A673 (cell line): ENCODE measurements at regions of chr22 and their contacts with region 1.

Region 1: GRCh38 chr22:28829358-28830181 is 29.2 kb upstream of the XBP1 start:
- DNase-seq: peak; percentile 80
- H3K4me3 ChIP-seq: no peak overlapping the region
- H3K27ac ChIP-seq: no peak overlapping the region
- H3K4me1 ChIP-seq: no peaks in the 10 kb centered on the region
- H3K27me3 ChIP-seq: no peaks in the 10 kb centered on the region
- CTCF ChIP-seq: peak; percentile 98

Region 2: GRCh38 chr22:28019881-28020871 is 809.4 kb before region 1 on chr22:
- CTCF ChIA-PET with region 1: interaction called, 3 read pairs
- POLR2A ChIA-PET with region 1: no interaction called
- intact Hi-C with region 1: loop called (anchors 10 kb)
- DNase-seq: peak; percentile 77
- H3K4me3 ChIP-seq: no peak overlapping the region
- H3K27ac ChIP-seq: no peak overlapping the region
- H3K4me1 ChIP-seq: no peaks in the 10 kb centered on the region
- H3K27me3 ChIP-seq: no peaks in the 10 kb centered on the region
- CTCF ChIP-seq: peak; percentile 97

Region 3: GRCh38 chr22:28373831-28374230 is 455.7 kb before region 1 on chr22:
- CTCF ChIA-PET with region 1: no interaction called
- POLR2A ChIA-PET with region 1: interaction called, 13 read pairs
- intact Hi-C with region 1: no loop called
- DNase-seq: no peak
- H3K4me3 ChIP-seq: no peak overlapping the region
- H3K27ac ChIP-seq: no peak overlapping the region
- H3K4me1 ChIP-seq: peaks cover 22% of the 10 kb centered on the region
- H3K27me3 ChIP-seq: no peaks in the 10 kb centered on the region
- CTCF ChIP-seq: no peak

Region 4: GRCh38 chr22:28600546-28601143 is 228.9 kb before region 1 on chr22:
- CTCF ChIA-PET with region 1: interaction called, 16 read pairs
- POLR2A ChIA-PET with region 1: interaction called, 4 read pairs
- intact Hi-C with region 1: loop called (anchors 1 kb)
- DNase-seq: peak; percentile 81
- H3K4me3 ChIP-seq: no peak overlapping the region
- H3K27ac ChIP-seq: no peak overlapping the region
- H3K4me1 ChIP-seq: peaks cover 20% of the 10 kb centered on the region
- H3K27me3 ChIP-seq: no peaks in the 10 kb centered on the region
- CTCF ChIP-seq: peak; percentile 68

Region 5: GRCh38 chr22:28791841-28792490 is 37.6 kb before region 1 on chr22:
- CTCF ChIA-PET with region 1: no interaction called
- POLR2A ChIA-PET with region 1: no interaction called
- intact Hi-C with region 1: no loop called
- DNase-seq: no peak
- H3K4me3 ChIP-seq: no peak overlapping the region
- H3K27ac ChIP-seq: no peak overlapping the region
- H3K4me1 ChIP-seq: peaks cover 5% of the 10 kb centered on the region
- H3K27me3 ChIP-seq: no peaks in the 10 kb centered on the region
- CTCF ChIP-seq: no peak

Region 6: DNA sequence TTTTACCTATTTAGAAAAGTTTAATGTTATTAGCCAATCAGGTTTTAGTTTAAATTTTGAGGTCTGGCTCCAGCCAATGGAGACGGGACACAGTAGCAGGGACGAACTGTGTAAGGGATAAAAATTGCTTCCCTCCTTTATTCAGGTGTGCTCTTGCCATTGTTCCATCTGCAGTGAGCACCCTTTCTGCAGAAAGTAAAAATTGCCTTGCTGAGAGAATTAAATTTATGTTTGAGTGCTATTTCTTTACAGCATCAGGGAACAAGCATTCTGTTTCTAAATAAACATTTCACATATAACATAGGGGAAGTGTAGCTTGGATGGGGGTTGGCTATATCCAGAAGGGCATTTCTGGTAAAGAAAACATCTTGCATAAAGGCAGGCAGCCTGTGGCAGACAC is 17.4 kb after region 1 on chr22:
- CTCF ChIA-PET with region 1: no interaction called
- POLR2A ChIA-PET with region 1: no interaction called
- intact Hi-C with region 1: no loop called
- DNase-seq: no peak
- H3K4me3 ChIP-seq: no peak overlapping the region
- H3K27ac ChIP-seq: no peak overlapping the region
- H3K4me1 ChIP-seq: no peaks in the 10 kb centered on the region
- H3K27me3 ChIP-seq: no peaks in the 10 kb centered on the region
- CTCF ChIP-seq: no peak